ENCODE measurements at regions of chr5 and their contacts with region 1.

Region 1: GRCh38 chr5:7382588-7382987 is 13.3 kb upstream of the ADCY2 start:
- H3K4me3 Mint-ChIP-seq: no peak overlapping the region
- H3K27ac Mint-ChIP-seq: no peak overlapping the region
- H3K4me1 Mint-ChIP-seq: peaks cover 11% of the 10 kb centered on the region
- H3K27me3 Mint-ChIP-seq: no peaks in the 10 kb centered on the region

Region 2: GRCh38 chr5:7251132-7251531 is 131.5 kb before region 1 on chr5:
- intact Hi-C with region 1: loop called (anchors 10 kb)
- H3K4me3 Mint-ChIP-seq: peak overlapping the region; percentile 28
- H3K27ac Mint-ChIP-seq: peak overlapping the region; percentile 50
- H3K4me1 Mint-ChIP-seq: peaks cover 12% of the 10 kb centered on the region
- H3K27me3 Mint-ChIP-seq: no peaks in the 10 kb centered on the region

Region 3: GRCh38 chr5:7458601-7459000 is 76.0 kb after region 1 on chr5:
- intact Hi-C with region 1: no loop called
- H3K4me3 Mint-ChIP-seq: no peak overlapping the region
- H3K27ac Mint-ChIP-seq: no peak overlapping the region
- H3K4me1 Mint-ChIP-seq: no peaks in the 10 kb centered on the region
- H3K27me3 Mint-ChIP-seq: no peaks in the 10 kb centered on the region

Region 4: DNA sequence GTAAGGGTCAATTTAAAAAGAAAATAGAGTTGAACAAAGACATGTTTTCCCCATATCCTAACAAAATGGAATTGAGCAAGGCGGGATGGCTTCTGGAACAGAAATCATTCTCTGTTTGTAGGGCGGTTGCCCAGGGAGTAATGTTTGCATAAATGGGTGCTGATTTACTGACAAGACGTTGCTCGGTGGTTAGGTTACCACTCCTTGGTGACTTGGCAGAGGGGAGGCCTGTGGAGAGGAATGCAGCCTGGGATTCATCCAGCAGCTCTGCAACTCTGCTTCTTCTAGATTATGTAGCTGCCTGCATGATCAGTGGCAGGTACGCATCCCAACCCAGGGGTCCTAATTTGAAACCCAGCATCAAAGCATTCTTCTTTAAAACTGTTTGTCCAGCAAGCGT is 268.2 kb after region 1 on chr5:
- intact Hi-C with region 1: no loop called
- H3K4me3 Mint-ChIP-seq: no peak overlapping the region
- H3K27ac Mint-ChIP-seq: no peak overlapping the region
- H3K4me1 Mint-ChIP-seq: no peaks in the 10 kb centered on the region
- H3K27me3 Mint-ChIP-seq: no peaks in the 10 kb centered on the region

Measured in dendritic cell treated with granulocyte-macrophage colony-stimulating factor and Interleukin-4, amounts not matched to agents 40 ng/mL and 50 ng/mL, for 4 days (primary cell).